Calu3 (cell line): ENCODE measurements at regions of chr11 and their contacts with region 1.

Region 1: GRCh38 chr11:14300661-14301304 is 58.2 kb downstream of the RRAS2 start:
- DNase-seq: peak; percentile 57
- H3K4me3 Mint-ChIP-seq: no peak overlapping the region
- H3K27ac Mint-ChIP-seq: no peak overlapping the region
- H3K4me1 Mint-ChIP-seq: no peaks in the 10 kb centered on the region
- H3K27me3 Mint-ChIP-seq: no peaks in the 10 kb centered on the region
- CTCF ChIP-seq: peak; percentile 68

Region 2: GRCh38 chr11:14347991-14348390 is 47.2 kb after region 1 on chr11:
- CTCF ChIA-PET with region 1: no interaction called
- intact Hi-C with region 1: no loop called
- DNase-seq: no peak
- H3K4me3 Mint-ChIP-seq: no peak overlapping the region
- H3K27ac Mint-ChIP-seq: no peak overlapping the region
- H3K4me1 Mint-ChIP-seq: no peaks in the 10 kb centered on the region
- H3K27me3 Mint-ChIP-seq: no peaks in the 10 kb centered on the region
- CTCF ChIP-seq: no peak

Region 3: DNA sequence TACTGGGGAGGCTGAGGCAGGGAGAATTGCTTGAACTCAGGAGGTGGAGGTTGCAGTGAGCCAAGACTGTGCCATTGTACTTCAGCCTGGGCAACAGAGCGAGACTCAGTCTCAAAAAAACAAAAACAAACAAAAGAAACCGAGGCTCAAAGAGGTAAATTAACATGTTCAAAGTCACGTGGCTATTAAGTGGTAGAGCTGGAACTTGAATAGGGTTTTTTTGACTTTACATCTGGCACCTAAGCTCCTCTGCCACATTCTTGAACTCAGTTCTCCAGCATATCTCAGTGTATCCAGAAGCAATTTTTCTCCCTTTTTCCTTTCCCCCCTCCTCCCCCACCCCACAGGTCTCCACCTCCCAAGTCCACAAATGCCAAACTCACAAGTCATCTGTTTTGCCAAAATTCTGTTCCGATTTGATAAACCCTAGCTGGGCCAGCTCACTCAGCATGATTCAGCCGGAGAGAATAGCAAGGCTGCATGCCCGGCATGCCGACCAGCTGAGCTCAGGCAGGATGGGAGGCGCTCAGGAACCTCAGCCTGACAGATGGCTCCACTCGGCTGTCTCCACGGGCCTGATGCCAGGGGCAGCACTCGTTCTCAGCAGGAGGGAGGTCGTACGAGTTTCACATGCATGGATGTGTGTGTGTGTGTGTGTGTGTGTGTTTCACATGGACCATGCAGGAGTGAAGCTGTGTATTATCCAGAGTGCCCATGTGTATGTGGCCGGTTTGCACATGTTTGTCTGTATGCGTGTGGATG is 121.5 kb after region 1 on chr11:
- CTCF ChIA-PET with region 1: interaction called, 20 read pairs
- intact Hi-C with region 1: loop called (anchors 2 kb)
- DNase-seq: peak; percentile 62
- H3K4me3 Mint-ChIP-seq: no peak overlapping the region
- H3K27ac Mint-ChIP-seq: no peak overlapping the region
- H3K4me1 Mint-ChIP-seq: peaks cover 7% of the 10 kb centered on the region
- H3K27me3 Mint-ChIP-seq: no peaks in the 10 kb centered on the region
- CTCF ChIP-seq: no peak

Region 4: DNA sequence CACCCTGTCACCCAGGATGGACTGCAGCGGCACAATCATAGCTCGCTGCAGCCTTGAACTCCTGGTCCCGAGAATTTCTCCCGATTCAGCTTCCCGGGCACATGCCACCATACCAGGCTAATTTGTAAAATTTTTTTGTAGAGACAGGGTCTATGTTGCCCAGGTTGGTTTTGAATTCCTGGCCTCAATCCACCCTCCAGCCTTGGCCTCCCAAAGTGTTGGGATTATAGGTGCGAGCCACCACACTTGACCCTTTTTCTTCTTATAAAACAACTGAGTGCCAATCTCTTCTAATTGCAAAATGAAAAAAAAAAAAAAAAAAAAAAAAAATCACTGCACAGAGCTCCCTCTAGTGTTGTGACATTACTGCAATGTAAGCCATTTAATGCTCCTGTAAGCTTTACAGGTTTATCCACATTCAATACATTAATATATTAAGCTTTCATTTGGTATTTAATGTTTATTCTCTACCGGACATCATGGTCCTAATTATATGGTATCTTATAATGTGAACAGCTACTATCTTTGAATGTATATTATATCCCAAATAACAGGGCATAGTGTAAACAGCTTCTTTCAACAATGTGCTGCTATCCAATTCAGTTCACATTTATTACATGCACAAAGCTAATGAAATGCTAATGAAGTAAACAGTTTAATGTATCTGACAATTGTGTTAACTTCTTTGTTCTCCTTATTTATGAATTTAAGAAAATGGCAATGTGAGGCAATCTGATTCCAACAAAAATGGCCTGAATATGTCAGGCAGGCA is 154.3 kb after region 1 on chr11:
- CTCF ChIA-PET with region 1: interaction called, 56 read pairs
- intact Hi-C with region 1: loop called (anchors 1 kb)
- DNase-seq: no peak
- H3K4me3 Mint-ChIP-seq: no peak overlapping the region
- H3K27ac Mint-ChIP-seq: no peak overlapping the region
- H3K4me1 Mint-ChIP-seq: no peaks in the 10 kb centered on the region
- H3K27me3 Mint-ChIP-seq: no peaks in the 10 kb centered on the region
- CTCF ChIP-seq: peak; percentile 39